Heart left ventricle (tissue), 16 donors: ENCODE measurements at regions of chr10 and their contacts with region 1.

Region 1: DNA sequence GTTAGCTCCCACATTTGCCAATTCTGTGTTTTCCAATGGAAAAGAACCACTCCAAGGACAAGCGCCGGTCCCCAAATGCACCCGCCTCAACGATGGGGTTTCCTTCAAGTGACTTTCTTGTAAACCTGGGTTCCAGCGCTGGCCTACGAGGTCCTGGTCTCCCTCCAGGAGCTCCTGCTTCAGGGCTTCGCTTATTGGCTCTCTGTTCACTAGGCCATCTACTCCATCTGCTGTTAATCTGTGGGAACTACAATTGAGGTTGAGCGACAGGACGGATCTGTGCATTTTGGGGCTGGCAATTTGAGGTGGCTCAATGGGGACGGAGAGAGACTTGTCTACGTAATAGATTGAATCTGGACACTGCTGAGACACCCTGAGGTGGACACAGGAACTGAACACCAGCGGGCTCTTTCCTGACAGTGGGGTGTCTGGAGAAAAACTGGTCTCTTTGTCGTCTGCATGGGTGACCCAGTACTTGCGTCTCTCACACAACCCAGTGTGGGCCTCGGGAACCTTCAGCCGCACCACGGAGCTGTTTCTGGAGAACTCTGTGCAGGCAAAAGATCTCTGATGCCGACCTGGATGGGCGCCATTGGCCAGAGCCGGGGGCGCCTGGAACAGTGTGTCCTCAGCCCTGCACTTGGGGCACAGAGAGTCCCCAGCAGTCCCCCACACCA is 115.9 kb upstream of the ADAM12 start:
- DNase-seq: peak in 2 of 5 donors; percentile 23 to 31
- ATAC-seq: peak in 3 of 4 donors; percentile 64 to 70 (median 69)
- H3K4me3 ChIP-seq: no peak overlapping the region
- H3K27ac ChIP-seq: no peak overlapping the region
- H3K4me1 ChIP-seq: no peaks in the 10 kb centered on the region
- H3K27me3 ChIP-seq: peaks cover 0 to 11% (median 0%) of the 10 kb centered on the region in 9 donors
- CTCF ChIP-seq: peak; percentile 41 to 79 (median 58)
- POLR2A ChIP-seq: no peak

Region 2: GRCh38 chr10:125868372-125868975 is 635.7 kb before region 1 on chr10:
- intact Hi-C with region 1: loop called in 4 of 10 experiments (anchors 5 to 10 kb)
- DNase-seq: no peak
- ATAC-seq: peak in 1 of 4 donors; percentile 58
- H3K4me3 ChIP-seq: no peak overlapping the region
- H3K27ac ChIP-seq: no peak overlapping the region
- H3K4me1 ChIP-seq: peaks cover 0 to 5% (median 0%) of the 10 kb centered on the region in 12 donors
- H3K27me3 ChIP-seq: no peaks in the 10 kb centered on the region
- CTCF ChIP-seq: peak; percentile 68 to 84 (median 78)
- POLR2A ChIP-seq: no peak

Region 3: GRCh38 chr10:125878957-125879835 is 625.0 kb before region 1 on chr10:
- intact Hi-C with region 1: loop called in 2 of 10 experiments (anchors 5 to 10 kb)
- DNase-seq: no peak
- ATAC-seq: no peak
- H3K4me3 ChIP-seq: peak overlapping the region in 6 of 12 donors; percentile 10 to 36 (median 27)
- H3K27ac ChIP-seq: peak overlapping the region in 1 of 12 donors; percentile 6
- H3K4me1 ChIP-seq: peaks cover 0 to 33% (median 4%) of the 10 kb centered on the region in 12 donors
- H3K27me3 ChIP-seq: no peaks in the 10 kb centered on the region
- CTCF ChIP-seq: no peak
- POLR2A ChIP-seq: no peak

Region 4: GRCh38 chr10:126387023-126387921 is 116.9 kb before region 1 on chr10:
- intact Hi-C with region 1: loop called in 1 of 10 experiments (anchors 10 kb)
- DNase-seq: peak; percentile 48 to 79 (median 50)
- ATAC-seq: peak in 3 of 4 donors; percentile 56 to 66 (median 59)
- H3K4me3 ChIP-seq: peak overlapping the region; percentile 23 to 64 (median 48)
- H3K27ac ChIP-seq: peak overlapping the region in 2 of 12 donors; percentile 24 to 59
- H3K4me1 ChIP-seq: peaks cover 0 to 23% (median 7%) of the 10 kb centered on the region in 12 donors
- H3K27me3 ChIP-seq: peaks cover 15 to 53% (median 29%) of the 10 kb centered on the region in 9 donors
- CTCF ChIP-seq: peak; percentile 41 to 86 (median 66)
- POLR2A ChIP-seq: no peak